B cell (primary cell): ENCODE measurements at regions of chr11 and their contacts with region 1.

Region 1: DNA sequence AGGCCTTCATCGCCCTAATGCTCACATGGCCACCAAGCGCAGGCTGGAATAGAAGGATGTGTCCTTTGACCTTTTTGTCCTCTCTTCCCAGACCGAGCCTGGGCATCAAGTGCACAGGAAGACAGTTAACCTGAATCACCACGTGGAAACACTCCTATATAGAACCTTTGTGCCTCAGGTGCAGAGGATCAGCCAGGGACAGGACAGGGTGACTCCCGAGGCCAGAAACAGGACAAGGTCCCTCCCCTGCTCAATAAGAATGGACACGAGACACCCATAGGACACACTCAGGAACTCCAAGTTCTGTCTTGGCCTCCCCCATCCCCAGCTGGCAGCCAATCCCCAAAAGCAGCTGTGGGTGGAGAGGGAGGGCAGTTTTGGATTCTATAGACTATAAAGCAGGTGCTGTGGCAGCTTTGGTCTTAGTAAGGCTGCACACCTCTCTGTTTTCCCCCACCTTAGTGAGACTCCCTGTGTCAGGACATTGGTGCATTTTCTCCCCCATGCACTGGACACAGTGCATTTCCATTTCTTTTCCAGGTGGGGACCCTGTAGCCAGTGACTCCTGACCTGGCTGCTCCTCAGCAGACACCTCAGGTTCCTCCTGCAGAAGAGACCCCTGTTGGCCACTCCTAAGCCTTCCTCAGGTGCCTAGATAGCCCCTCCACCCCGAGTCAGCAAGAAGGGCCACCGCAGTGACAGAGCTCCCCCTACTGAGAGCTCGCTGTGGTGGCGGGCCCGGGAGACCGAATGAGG is 43.6 kb upstream of the POU2AF1 start:
- DNase-seq: peak; percentile 84
- ATAC-seq: peak; percentile 83
- H3K4me3 ChIP-seq: no peak overlapping the region
- H3K4me3 Mint-ChIP-seq: peak overlapping the region; percentile 64
- H3K27ac ChIP-seq: no peak overlapping the region
- H3K27ac Mint-ChIP-seq: peak overlapping the region; percentile 90
- H3K4me1 ChIP-seq: peaks cover 58% of the 10 kb centered on the region in 2 donors
- H3K4me1 Mint-ChIP-seq: peaks cover 58% of the 10 kb centered on the region
- H3K27me3 ChIP-seq: no peaks in the 10 kb centered on the region
- H3K27me3 Mint-ChIP-seq: no peaks in the 10 kb centered on the region
- CTCF ChIP-seq: peak; percentile 88

Region 2: GRCh38 chr11:111035746-111036145 is 386.9 kb before region 1 on chr11:
- CTCF ChIA-PET with region 1: no interaction called
- POLR2A ChIA-PET with region 1: no interaction called
- intact Hi-C with region 1: no loop called
- DNase-seq: no peak
- ATAC-seq: no peak
- H3K4me3 ChIP-seq: no peak overlapping the region
- H3K4me3 Mint-ChIP-seq: no peak overlapping the region
- H3K27ac ChIP-seq: no peak overlapping the region
- H3K27ac Mint-ChIP-seq: no peak overlapping the region
- H3K4me1 ChIP-seq: no peaks in the 10 kb centered on the region
- H3K4me1 Mint-ChIP-seq: no peaks in the 10 kb centered on the region
- H3K27me3 ChIP-seq: no peaks in the 10 kb centered on the region
- H3K27me3 Mint-ChIP-seq: no peaks in the 10 kb centered on the region
- CTCF ChIP-seq: no peak

Region 3: GRCh38 chr11:111177037-111177871 is 245.4 kb before region 1 on chr11:
- CTCF ChIA-PET with region 1: interaction called, 3 read pairs
- POLR2A ChIA-PET with region 1: interaction called, 3 read pairs
- intact Hi-C with region 1: loop called (anchors 5 kb)
- DNase-seq: peak; percentile 86
- ATAC-seq: peak; percentile 83
- H3K4me3 ChIP-seq: peak overlapping the region in 2 of 5 experiments; percentile 29 to 42
- H3K4me3 Mint-ChIP-seq: peak overlapping the region; percentile 69
- H3K27ac ChIP-seq: peak overlapping the region; percentile 84 to 90
- H3K27ac Mint-ChIP-seq: peak overlapping the region; percentile 95
- H3K4me1 ChIP-seq: peaks cover 62 to 64% of the 10 kb centered on the region in 2 donors
- H3K4me1 Mint-ChIP-seq: peaks cover 67% of the 10 kb centered on the region
- H3K27me3 ChIP-seq: no peaks in the 10 kb centered on the region
- H3K27me3 Mint-ChIP-seq: no peaks in the 10 kb centered on the region
- CTCF ChIP-seq: no peak

Region 4: GRCh38 chr11:111299101-111300026 is 123.3 kb before region 1 on chr11:
- CTCF ChIA-PET with region 1: interaction called, 29 read pairs
- POLR2A ChIA-PET with region 1: interaction called, 5 read pairs
- intact Hi-C with region 1: loop called (anchors 1 kb)
- DNase-seq: peak; percentile 46
- ATAC-seq: peak; percentile 59
- H3K4me3 ChIP-seq: peak overlapping the region in 4 of 5 experiments; percentile 57 to 77 (median 66)
- H3K4me3 Mint-ChIP-seq: peak overlapping the region; percentile 76
- H3K27ac ChIP-seq: peak overlapping the region in 1 of 2 donors; percentile 23
- H3K27ac Mint-ChIP-seq: peak overlapping the region; percentile 61
- H3K4me1 ChIP-seq: peaks cover 32 to 45% of the 10 kb centered on the region in 2 donors
- H3K4me1 Mint-ChIP-seq: peaks cover 35% of the 10 kb centered on the region
- H3K27me3 ChIP-seq: peaks cover 0 to 29% (median 9%) of the 10 kb centered on the region in 4 experiments
- H3K27me3 Mint-ChIP-seq: peaks cover 12% of the 10 kb centered on the region
- CTCF ChIP-seq: peak; percentile 37

Region 5: DNA sequence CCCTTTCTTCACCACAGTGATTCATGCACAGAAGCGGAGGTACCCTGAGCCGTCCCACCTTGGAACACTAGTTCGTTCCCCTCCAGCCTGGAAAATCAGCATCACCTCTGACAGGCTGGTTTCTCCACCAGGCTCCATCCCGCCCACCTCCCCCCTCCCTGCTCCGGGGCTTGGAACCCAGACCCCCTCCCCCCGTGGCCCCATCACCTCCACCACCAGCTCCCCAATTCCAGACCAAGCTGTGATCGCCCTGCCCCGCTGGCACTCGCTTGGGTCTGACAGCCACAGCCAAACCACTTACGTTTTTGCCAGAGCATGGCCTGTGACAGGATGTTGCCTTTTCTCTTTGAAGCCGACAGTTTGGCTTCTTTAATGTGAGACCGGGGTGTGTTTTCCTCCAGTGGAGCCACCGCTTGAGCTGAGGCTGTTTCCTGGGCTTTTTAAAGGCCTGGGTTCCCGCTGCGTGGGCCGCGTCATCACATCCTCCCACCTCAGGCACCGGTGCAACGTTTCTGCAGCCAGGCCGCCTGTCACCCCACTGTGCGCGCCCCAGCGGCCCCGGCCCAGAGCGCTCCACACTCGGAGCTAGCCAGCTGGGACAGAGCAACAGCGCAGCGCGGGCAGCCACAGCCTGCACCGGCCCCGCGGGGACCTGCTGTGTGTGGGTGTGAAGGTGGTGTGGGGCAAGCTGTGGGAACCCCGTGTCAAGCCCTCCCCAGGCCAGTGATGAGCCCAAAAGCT is 43.6 kb before region 1 on chr11 and contains the start of gene POU2AF1:
- CTCF ChIA-PET with region 1: interaction called, 922 read pairs
- POLR2A ChIA-PET with region 1: interaction called, 314 read pairs
- intact Hi-C with region 1: loop called (anchors 1 kb)
- DNase-seq: peak; percentile 93
- ATAC-seq: peak; percentile 73
- H3K4me3 ChIP-seq: peak within 1 kb of the TSS; percentile 66 to 91 (median 89)
- H3K4me3 Mint-ChIP-seq: peak within 1 kb of the TSS; percentile 100
- H3K27ac ChIP-seq: peak within 1 kb of the TSS; percentile 96 to 97
- H3K27ac Mint-ChIP-seq: peak within 1 kb of the TSS; percentile 100
- H3K4me1 ChIP-seq: peaks cover 71 to 72% of the 10 kb centered on the region in 2 donors
- H3K4me1 Mint-ChIP-seq: peaks cover 72% of the 10 kb centered on the region
- H3K27me3 ChIP-seq: no peaks in the 10 kb centered on the region
- H3K27me3 Mint-ChIP-seq: no peaks in the 10 kb centered on the region
- CTCF ChIP-seq: no peak
- total RNA-seq, gene POU2AF1: 404 and 407 TPM in 2 replicates

Region 6: DNA sequence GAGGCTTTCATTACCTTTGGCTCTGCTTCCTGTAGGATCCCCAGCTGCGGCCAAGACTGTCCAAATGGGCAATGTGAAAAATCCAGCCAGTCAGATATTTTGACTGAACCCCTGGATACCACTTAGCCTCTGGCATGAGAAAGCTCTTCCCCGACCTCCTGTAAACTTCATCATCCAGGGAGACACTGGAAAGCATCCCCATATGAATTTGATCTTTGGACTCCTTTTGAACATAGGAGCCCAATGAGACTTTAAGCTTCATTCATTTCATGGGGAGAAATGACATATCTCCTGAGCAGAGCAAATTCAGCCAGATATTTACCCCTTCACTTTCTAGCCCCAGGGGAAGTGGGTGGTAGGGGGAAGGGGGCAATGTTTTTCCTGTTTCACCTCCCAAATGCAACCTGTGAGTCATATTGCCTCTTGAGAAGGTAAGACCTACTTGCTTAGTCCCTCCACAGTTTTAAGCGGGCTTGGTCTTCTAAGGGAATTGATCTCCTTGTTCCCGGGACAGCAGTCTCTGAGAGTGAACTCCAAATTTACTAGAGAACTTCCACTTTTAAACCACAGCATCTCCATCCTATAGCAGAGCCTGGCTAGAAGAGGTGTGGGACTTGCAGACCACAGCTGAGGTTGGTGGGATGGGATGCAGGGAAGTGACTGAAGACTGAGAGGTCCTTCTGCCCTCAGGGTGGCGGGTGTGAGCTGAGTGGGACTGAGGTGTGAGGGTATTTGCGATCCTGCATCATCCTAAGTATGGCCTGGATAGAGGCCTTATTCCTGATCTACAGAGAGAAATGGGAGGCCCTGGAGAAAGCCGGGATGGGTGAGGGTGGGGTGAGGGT is 23.3 kb before region 1 on chr11:
- CTCF ChIA-PET with region 1: interaction called, 163 read pairs
- POLR2A ChIA-PET with region 1: interaction called, 63 read pairs
- intact Hi-C with region 1: loop called (anchors 1 kb)
- DNase-seq: peak; percentile 52
- ATAC-seq: peak; percentile 55
- H3K4me3 ChIP-seq: peak overlapping the region in 4 of 5 experiments; percentile 0 to 45 (median 34)
- H3K4me3 Mint-ChIP-seq: peak overlapping the region; percentile 88
- H3K27ac ChIP-seq: peak overlapping the region; percentile 72 to 86
- H3K27ac Mint-ChIP-seq: peak overlapping the region; percentile 93
- H3K4me1 ChIP-seq: peaks cover 57 to 58% of the 10 kb centered on the region in 2 donors
- H3K4me1 Mint-ChIP-seq: peaks cover 73% of the 10 kb centered on the region
- H3K27me3 ChIP-seq: no peaks in the 10 kb centered on the region
- H3K27me3 Mint-ChIP-seq: no peaks in the 10 kb centered on the region
- CTCF ChIP-seq: no peak

Region 7: DNA sequence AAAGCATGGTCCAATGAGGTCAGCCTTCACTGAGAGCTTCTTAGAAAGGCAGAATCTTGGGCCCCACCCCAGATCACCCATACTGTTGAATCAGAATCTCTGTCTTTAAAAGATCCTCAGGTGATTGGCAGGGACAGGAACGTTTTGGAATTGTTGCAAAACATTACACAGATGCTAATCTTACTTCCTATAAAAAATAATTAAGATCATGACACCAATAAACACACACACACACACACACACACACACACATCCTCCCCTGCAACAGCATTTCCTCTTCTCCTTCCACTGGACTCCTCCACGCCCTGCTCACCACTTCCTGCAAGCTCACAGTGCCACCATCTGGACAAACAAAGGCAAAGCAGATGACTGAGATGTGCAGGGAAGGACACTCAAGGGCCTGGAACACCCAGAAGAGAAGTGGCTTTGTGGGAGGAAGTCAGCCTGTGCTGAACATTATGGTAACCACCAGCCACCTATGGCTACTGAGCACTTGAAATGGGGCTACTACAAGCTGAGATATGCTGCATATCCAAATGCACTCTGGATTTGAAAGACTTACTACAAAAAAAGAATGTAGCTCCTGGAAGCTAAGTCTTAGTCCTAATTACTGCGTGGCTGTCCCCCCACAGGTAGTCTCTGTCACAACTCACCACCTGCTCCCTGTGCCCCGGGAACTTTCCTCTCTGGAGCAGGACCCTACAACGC is 23.9 kb after region 1 on chr11:
- CTCF ChIA-PET with region 1: interaction called, 112 read pairs
- POLR2A ChIA-PET with region 1: interaction called, 8 read pairs
- intact Hi-C with region 1: loop called (anchors 1 kb)
- DNase-seq: peak; percentile 94
- ATAC-seq: peak; percentile 98
- H3K4me3 ChIP-seq: no peak overlapping the region
- H3K4me3 Mint-ChIP-seq: peak overlapping the region; percentile 1
- H3K27ac ChIP-seq: no peak overlapping the region
- H3K27ac Mint-ChIP-seq: peak overlapping the region; percentile 28
- H3K4me1 ChIP-seq: peaks cover 31 to 35% of the 10 kb centered on the region in 2 donors
- H3K4me1 Mint-ChIP-seq: peaks cover 37% of the 10 kb centered on the region
- H3K27me3 ChIP-seq: no peaks in the 10 kb centered on the region
- H3K27me3 Mint-ChIP-seq: peaks cover under 1% of the 10 kb centered on the region
- CTCF ChIP-seq: peak; percentile 74